ENCODE measurements at regions of chr4 and their contacts with region 1.

Region 1: DNA sequence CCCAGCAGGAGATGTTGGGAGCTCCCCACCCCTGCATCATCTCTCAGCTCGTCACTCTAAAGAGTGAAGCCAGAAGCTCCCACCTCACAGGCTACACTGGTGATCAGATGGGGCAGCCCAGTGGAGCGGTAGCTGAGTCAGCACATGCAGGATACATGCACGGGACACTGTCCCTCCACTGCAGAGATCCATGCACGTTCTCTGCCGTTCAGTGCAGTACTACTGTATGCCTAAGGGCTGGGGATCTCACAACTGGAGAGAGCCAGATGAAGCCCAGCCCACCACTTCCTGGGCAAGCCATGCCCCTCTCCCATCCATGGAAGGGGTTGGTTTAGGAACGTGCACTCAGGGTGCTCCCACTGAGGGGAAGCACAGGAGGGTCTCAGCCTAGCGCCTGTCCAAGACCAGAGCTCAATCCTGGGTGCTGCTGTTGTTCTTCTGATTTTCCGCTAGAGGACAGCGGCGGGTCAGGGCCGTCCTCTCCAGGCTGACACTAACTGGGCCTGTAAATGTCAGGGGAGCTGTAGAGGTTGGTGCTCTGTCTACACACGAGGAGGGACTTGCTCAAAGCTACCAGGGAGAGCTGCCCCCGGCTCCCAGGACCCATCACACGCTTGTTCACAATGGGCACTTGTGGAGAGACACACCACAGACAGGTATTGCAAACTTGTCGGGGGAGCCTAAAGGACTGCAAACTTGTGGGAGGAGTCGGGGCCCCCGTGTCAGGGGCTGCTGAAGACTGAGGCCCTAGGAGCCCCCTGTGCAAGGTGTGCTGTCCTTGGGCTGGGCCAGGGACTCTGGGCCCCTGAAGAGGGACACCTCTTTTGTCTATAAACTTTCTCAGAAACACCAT is 18.2 kb upstream of the ABLIM2 start:
- DNase-seq: peak; percentile 69 to 71
- H3K4me3 ChIP-seq: no peak overlapping the region
- H3K4me3 Mint-ChIP-seq: no peak overlapping the region
- H3K27ac Mint-ChIP-seq: no peak overlapping the region
- H3K4me1 ChIP-seq: peaks cover 17% of the 10 kb centered on the region
- H3K4me1 Mint-ChIP-seq: peaks cover 9% of the 10 kb centered on the region
- H3K27me3 ChIP-seq: no peaks in the 10 kb centered on the region
- H3K27me3 Mint-ChIP-seq: no peaks in the 10 kb centered on the region
- CTCF ChIP-seq: peak; percentile 74 to 95

Region 2: DNA sequence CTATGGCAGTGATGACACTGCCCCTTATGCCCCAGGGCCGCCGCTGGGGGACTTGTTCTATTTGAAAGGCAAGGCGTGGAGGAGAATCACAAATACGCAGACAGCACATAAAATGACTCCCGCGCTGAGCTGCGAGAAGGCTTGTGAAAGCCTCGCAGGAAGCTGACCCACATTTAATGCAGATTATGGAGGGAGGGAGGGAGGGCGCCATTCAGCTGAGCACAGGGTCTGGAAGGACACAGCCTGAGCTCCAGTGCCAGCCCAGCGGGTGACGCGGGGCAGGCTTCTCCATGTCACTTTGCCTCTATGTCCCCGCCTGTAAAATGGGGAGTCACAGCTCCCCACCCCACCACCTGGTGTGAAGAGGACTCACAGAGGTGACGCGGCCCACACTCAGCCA is 32.4 kb before region 1 on chr4:
- CTCF ChIA-PET with region 1: no interaction called
- POLR2A ChIA-PET with region 1: no interaction called
- intact Hi-C with region 1: no loop called
- DNase-seq: no peak
- H3K4me3 ChIP-seq: no peak overlapping the region
- H3K4me3 Mint-ChIP-seq: no peak overlapping the region
- H3K27ac Mint-ChIP-seq: no peak overlapping the region
- H3K4me1 ChIP-seq: no peaks in the 10 kb centered on the region
- H3K4me1 Mint-ChIP-seq: no peaks in the 10 kb centered on the region
- H3K27me3 ChIP-seq: no peaks in the 10 kb centered on the region
- H3K27me3 Mint-ChIP-seq: peaks cover 6% of the 10 kb centered on the region
- CTCF ChIP-seq: no peak

Region 3: GRCh38 chr4:8192748-8193738 is 16.3 kb after region 1 on chr4:
- CTCF ChIA-PET with region 1: interaction called, 21 read pairs
- POLR2A ChIA-PET with region 1: interaction called, 3 read pairs
- intact Hi-C with region 1: loop called (anchors 1 kb)
- DNase-seq: peak; percentile 68 to 78
- H3K4me3 ChIP-seq: no peak overlapping the region
- H3K4me3 Mint-ChIP-seq: no peak overlapping the region
- H3K27ac Mint-ChIP-seq: peak overlapping the region; percentile 85
- H3K4me1 ChIP-seq: peaks cover 15% of the 10 kb centered on the region; the same call in 1 of the 2 replicates
- H3K4me1 Mint-ChIP-seq: peaks cover 13% of the 10 kb centered on the region
- H3K27me3 ChIP-seq: no peaks in the 10 kb centered on the region
- H3K27me3 Mint-ChIP-seq: no peaks in the 10 kb centered on the region
- CTCF ChIP-seq: peak in 1 of 2 experiments; percentile 34

Region 4: GRCh38 chr4:8207314-8207713 is 30.5 kb after region 1 on chr4:
- CTCF ChIA-PET with region 1: interaction called, 11 read pairs
- POLR2A ChIA-PET with region 1: no interaction called
- intact Hi-C with region 1: no loop called
- DNase-seq: no peak
- H3K4me3 ChIP-seq: no peak overlapping the region
- H3K4me3 Mint-ChIP-seq: no peak overlapping the region
- H3K27ac Mint-ChIP-seq: no peak overlapping the region
- H3K4me1 ChIP-seq: peaks cover 9% of the 10 kb centered on the region
- H3K4me1 Mint-ChIP-seq: no peaks in the 10 kb centered on the region
- H3K27me3 ChIP-seq: no peaks in the 10 kb centered on the region
- H3K27me3 Mint-ChIP-seq: no peaks in the 10 kb centered on the region
- CTCF ChIP-seq: no peak

Region 5: GRCh38 chr4:8252301-8253173 is 75.8 kb after region 1 on chr4:
- CTCF ChIA-PET with region 1: no interaction called
- POLR2A ChIA-PET with region 1: no interaction called
- intact Hi-C with region 1: no loop called
- DNase-seq: no peak
- H3K4me3 ChIP-seq: no peak overlapping the region
- H3K4me3 Mint-ChIP-seq: no peak overlapping the region
- H3K27ac Mint-ChIP-seq: no peak overlapping the region
- H3K4me1 ChIP-seq: no peaks in the 10 kb centered on the region
- H3K4me1 Mint-ChIP-seq: no peaks in the 10 kb centered on the region
- H3K27me3 ChIP-seq: no peaks in the 10 kb centered on the region
- H3K27me3 Mint-ChIP-seq: no peaks in the 10 kb centered on the region
- CTCF ChIP-seq: no peak

Region 6: DNA sequence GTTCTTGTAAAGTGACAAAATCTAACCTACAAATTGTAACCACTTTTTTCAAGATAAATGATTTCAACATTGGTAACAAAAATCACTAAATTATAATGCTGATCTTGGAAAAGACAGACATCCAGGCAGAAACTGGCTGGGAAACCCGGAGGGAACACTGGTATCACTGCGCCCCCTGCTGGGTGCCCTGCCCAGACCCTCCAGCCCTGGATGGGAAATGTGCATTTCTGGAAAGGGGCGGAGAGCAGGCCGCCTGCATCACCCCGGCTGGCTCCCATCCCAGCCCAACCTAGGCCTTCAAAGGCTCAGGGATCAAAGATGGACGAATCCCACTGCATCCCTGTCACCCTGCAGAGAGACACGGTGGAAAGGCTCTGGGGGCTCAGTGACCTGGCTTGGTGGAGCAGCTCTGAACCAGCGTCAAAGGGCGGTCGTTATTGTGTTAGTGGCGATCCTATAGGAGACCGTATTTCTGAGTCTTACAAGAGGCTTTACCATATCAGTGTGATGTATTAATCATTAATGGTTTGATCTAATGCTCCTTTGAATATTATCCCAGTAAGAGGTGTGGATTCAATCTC is 226.5 kb after region 1 on chr4:
- CTCF ChIA-PET with region 1: interaction called, 16 read pairs
- POLR2A ChIA-PET with region 1: no interaction called
- intact Hi-C with region 1: loop called (anchors 1 kb)
- DNase-seq: peak; percentile 60 to 85
- H3K4me3 ChIP-seq: no peak overlapping the region
- H3K4me3 Mint-ChIP-seq: no peak overlapping the region
- H3K27ac Mint-ChIP-seq: no peak overlapping the region
- H3K4me1 ChIP-seq: no peaks in the 10 kb centered on the region
- H3K4me1 Mint-ChIP-seq: no peaks in the 10 kb centered on the region
- H3K27me3 ChIP-seq: no peaks in the 10 kb centered on the region
- H3K27me3 Mint-ChIP-seq: no peaks in the 10 kb centered on the region
- CTCF ChIP-seq: peak; percentile 79 to 87